CD4-positive, alpha-beta memory T cell (primary cell): ENCODE measurements at regions of chr10 and their contacts with region 1.

Region 1: GRCh38 chr10:3785257-3785850 is 345 bp upstream of the KLF6 start:
- DNase-seq: peak; percentile 99 to 100 (median 100)
- H3K4me3 ChIP-seq: peak overlapping the region; percentile 75 to 95
- H3K4me3 Mint-ChIP-seq: peak overlapping the region; percentile 90 to 99 (median 96)
- H3K27ac ChIP-seq: peak overlapping the region; percentile 97
- H3K27ac Mint-ChIP-seq: peak overlapping the region; percentile 98 to 100 (median 98)
- H3K4me1 ChIP-seq: peaks cover 23% of the 10 kb centered on the region
- H3K4me1 Mint-ChIP-seq: peaks cover 8 to 55% (median 24%) of the 10 kb centered on the region in 4 donors
- H3K27me3 ChIP-seq: no peaks in the 10 kb centered on the region
- H3K27me3 Mint-ChIP-seq: peaks cover 0 to 2% of the 10 kb centered on the region in 2 donors

Region 2: GRCh38 chr10:3585385-3585784 is 200.0 kb before region 1 on chr10:
- CTCF ChIA-PET with region 1: no interaction called
- POLR2A ChIA-PET with region 1: no interaction called
- intact Hi-C with region 1: no loop called
- DNase-seq: no peak
- H3K4me3 ChIP-seq: no peak overlapping the region
- H3K4me3 Mint-ChIP-seq: peak overlapping the region in 1 of 8 donors; percentile 21
- H3K27ac ChIP-seq: no peak overlapping the region
- H3K27ac Mint-ChIP-seq: no peak overlapping the region
- H3K4me1 ChIP-seq: no peaks in the 10 kb centered on the region
- H3K4me1 Mint-ChIP-seq: peaks cover 0 to 2% (median 0%) of the 10 kb centered on the region in 4 donors
- H3K27me3 ChIP-seq: no peaks in the 10 kb centered on the region
- H3K27me3 Mint-ChIP-seq: peaks cover 0 to 7% of the 10 kb centered on the region in 2 donors

Region 3: GRCh38 chr10:3740157-3740871 is 45.0 kb before region 1 on chr10:
- CTCF ChIA-PET with region 1: interaction called, 4 read pairs
- POLR2A ChIA-PET with region 1: interaction called, 79 read pairs
- intact Hi-C with region 1: no loop called
- DNase-seq: peak in 2 of 5 donors; percentile 6 to 21
- H3K4me3 ChIP-seq: no peak overlapping the region
- H3K4me3 Mint-ChIP-seq: peak overlapping the region in 6 of 8 donors; percentile 13 to 61 (median 46)
- H3K27ac ChIP-seq: no peak overlapping the region
- H3K27ac Mint-ChIP-seq: peak overlapping the region in 6 of 7 donors; percentile 2 to 82 (median 54)
- H3K4me1 ChIP-seq: peaks cover 17% of the 10 kb centered on the region
- H3K4me1 Mint-ChIP-seq: peaks cover 19 to 31% (median 23%) of the 10 kb centered on the region in 4 donors
- H3K27me3 ChIP-seq: no peaks in the 10 kb centered on the region
- H3K27me3 Mint-ChIP-seq: no peaks in the 10 kb centered on the region

Region 4: GRCh38 chr10:3835770-3836169 is 50.4 kb after region 1 on chr10:
- CTCF ChIA-PET with region 1: no interaction called
- POLR2A ChIA-PET with region 1: interaction called, 308 read pairs
- intact Hi-C with region 1: no loop called
- DNase-seq: no peak
- H3K4me3 ChIP-seq: no peak overlapping the region
- H3K4me3 Mint-ChIP-seq: peak overlapping the region in 7 of 8 donors; percentile 31 to 72 (median 47)
- H3K27ac ChIP-seq: no peak overlapping the region
- H3K27ac Mint-ChIP-seq: peak overlapping the region in 5 of 7 donors; percentile 30 to 73 (median 52)
- H3K4me1 ChIP-seq: peaks cover 16% of the 10 kb centered on the region
- H3K4me1 Mint-ChIP-seq: peaks cover 12 to 31% (median 28%) of the 10 kb centered on the region in 4 donors
- H3K27me3 ChIP-seq: no peaks in the 10 kb centered on the region
- H3K27me3 Mint-ChIP-seq: no peaks in the 10 kb centered on the region

Region 5: DNA sequence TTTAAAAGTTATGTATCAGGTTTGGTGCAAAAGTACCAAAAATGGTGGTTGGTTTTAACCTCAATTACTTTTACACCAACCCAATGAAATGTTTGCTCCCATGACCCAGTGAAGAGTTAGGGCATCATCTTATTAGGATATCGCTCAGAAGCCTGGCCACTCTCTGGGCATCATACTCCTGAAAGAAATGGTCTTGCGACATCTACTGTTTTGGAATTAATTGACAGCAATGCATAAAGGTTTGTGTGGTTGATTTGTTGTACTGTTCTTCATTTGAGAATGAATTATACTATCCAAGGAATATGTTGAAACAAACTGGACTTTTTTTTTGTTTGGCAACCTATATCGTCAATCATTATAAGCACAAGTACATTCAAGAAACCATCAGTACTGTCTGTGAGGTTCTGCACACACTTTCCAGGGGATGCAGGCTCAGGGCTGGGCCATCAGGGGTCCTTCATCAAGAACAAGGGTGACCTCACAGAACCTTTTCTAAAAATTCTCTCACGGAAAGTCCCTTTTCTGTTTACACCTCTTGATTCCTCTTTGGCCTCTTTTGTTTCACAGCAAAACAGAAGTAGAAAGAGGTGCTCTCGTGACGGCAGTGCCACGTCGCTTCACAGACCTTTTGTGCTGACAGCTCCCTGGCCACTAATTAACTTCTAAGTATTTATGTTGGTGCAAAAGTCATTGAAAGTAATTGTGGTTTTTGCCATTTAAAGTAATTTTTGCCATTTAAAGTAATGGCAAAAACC is 116.9 kb after region 1 on chr10:
- CTCF ChIA-PET with region 1: interaction called, 3 read pairs
- POLR2A ChIA-PET with region 1: interaction called, 56 read pairs
- intact Hi-C with region 1: no loop called
- DNase-seq: peak; percentile 47 to 81 (median 63)
- H3K4me3 ChIP-seq: no peak overlapping the region
- H3K4me3 Mint-ChIP-seq: peak overlapping the region in 6 of 8 donors; percentile 25 to 72 (median 48)
- H3K27ac ChIP-seq: peak overlapping the region; percentile 42
- H3K27ac Mint-ChIP-seq: peak overlapping the region; percentile 38 to 98 (median 89)
- H3K4me1 ChIP-seq: peaks cover 22% of the 10 kb centered on the region
- H3K4me1 Mint-ChIP-seq: peaks cover 10 to 30% (median 22%) of the 10 kb centered on the region in 4 donors
- H3K27me3 ChIP-seq: no peaks in the 10 kb centered on the region
- H3K27me3 Mint-ChIP-seq: no peaks in the 10 kb centered on the region

Region 6: GRCh38 chr10:3972460-3973301 is 187.3 kb after region 1 on chr10:
- CTCF ChIA-PET with region 1: interaction called, 3 read pairs
- POLR2A ChIA-PET with region 1: interaction called, 179 read pairs
- intact Hi-C with region 1: loop called (anchors 10 kb)
- DNase-seq: peak in 4 of 5 donors; percentile 26 to 62 (median 44)
- H3K4me3 ChIP-seq: no peak overlapping the region
- H3K4me3 Mint-ChIP-seq: peak overlapping the region; percentile 72 to 95 (median 84)
- H3K27ac ChIP-seq: peak overlapping the region; percentile 70
- H3K27ac Mint-ChIP-seq: peak overlapping the region; percentile 88 to 98 (median 96)
- H3K4me1 ChIP-seq: peaks cover 85% of the 10 kb centered on the region
- H3K4me1 Mint-ChIP-seq: peaks cover 44 to 61% (median 53%) of the 10 kb centered on the region in 4 donors
- H3K27me3 ChIP-seq: no peaks in the 10 kb centered on the region
- H3K27me3 Mint-ChIP-seq: no peaks in the 10 kb centered on the region

Region 7: GRCh38 chr10:4081685-4082111 is 296.3 kb after region 1 on chr10:
- CTCF ChIA-PET with region 1: no interaction called
- POLR2A ChIA-PET with region 1: interaction called, 51 read pairs
- intact Hi-C with region 1: no loop called
- DNase-seq: no peak
- H3K4me3 ChIP-seq: no peak overlapping the region
- H3K4me3 Mint-ChIP-seq: peak overlapping the region in 7 of 8 donors; percentile 0 to 68 (median 41)
- H3K27ac ChIP-seq: no peak overlapping the region
- H3K27ac Mint-ChIP-seq: peak overlapping the region; percentile 69 to 90 (median 88)
- H3K4me1 ChIP-seq: peaks cover 61% of the 10 kb centered on the region
- H3K4me1 Mint-ChIP-seq: peaks cover 42 to 59% (median 52%) of the 10 kb centered on the region in 4 donors
- H3K27me3 ChIP-seq: no peaks in the 10 kb centered on the region
- H3K27me3 Mint-ChIP-seq: no peaks in the 10 kb centered on the region